ENCODE measurements at regions of chr20 and their contacts with region 1.

Region 1: DNA sequence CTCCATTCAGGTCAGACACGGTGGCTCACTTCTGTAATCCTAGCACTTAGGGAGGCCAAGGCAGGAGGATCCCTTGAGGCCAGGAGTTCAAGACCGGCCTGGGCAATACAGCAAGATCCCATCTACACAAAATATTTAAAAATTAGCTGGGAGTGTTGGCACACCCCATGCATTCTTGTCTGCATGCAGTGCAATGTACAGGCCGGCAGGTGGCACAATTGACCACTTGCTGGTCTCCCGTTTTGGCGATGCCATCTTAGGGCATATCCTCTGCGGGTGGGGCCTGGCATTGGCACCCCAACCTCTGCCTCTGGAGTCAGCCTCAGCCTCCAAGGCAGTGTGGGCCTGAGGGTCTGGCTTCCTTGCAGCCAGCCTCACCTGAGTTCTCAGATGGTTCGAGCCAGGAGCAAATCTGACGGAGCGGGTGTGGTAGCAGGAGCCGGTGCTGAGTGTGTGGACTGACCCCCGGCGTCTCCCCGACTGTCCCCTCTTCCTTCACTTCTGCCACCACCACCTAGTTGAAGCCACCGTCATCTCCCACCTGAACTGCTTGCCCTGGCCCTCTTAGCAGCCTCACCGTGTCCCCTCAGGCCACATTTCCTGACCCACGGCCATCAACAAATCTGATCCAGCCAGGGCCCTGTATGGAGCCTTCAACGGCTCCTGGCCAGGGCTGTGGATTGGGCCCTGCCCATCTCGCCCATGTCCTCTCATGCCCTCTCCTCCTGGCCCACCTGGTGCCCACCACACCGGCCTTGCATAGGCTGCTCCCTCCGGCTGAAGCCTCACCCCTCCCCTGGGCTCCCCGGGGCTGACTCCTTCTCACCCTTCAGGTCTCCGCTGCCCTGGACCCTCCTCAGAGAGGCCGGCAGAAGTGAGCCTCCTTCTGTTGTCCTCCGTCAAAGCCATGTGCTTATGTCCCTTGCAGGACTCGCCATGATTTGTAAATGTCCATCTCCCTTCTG is 44.0 kb downstream of the EFCAB8 start:
- DNase-seq: peak; percentile 28 to 83 (median 71)
- ATAC-seq: peak; percentile 98
- H3K4me3 ChIP-seq: no peak overlapping the region
- H3K4me3 Mint-ChIP-seq: no peak overlapping the region
- H3K27ac ChIP-seq: no peak overlapping the region
- H3K27ac Mint-ChIP-seq: no peak overlapping the region
- H3K4me1 ChIP-seq: peaks cover 17% of the 10 kb centered on the region
- H3K4me1 Mint-ChIP-seq: peaks cover 22% of the 10 kb centered on the region
- H3K27me3 ChIP-seq: no peaks in the 10 kb centered on the region
- H3K27me3 Mint-ChIP-seq: no peaks in the 10 kb centered on the region
- CTCF ChIP-seq: peak; percentile 97

Region 2: GRCh38 chr20:32509639-32510066 is 393.1 kb before region 1 on chr20:
- CTCF ChIA-PET with region 1: no interaction called
- POLR2A ChIA-PET with region 1: no interaction called
- intact Hi-C with region 1: no loop called
- DNase-seq: peak; percentile 46 to 90 (median 81)
- ATAC-seq: peak; percentile 78
- H3K4me3 ChIP-seq: peak overlapping the region; percentile 51 to 77
- H3K4me3 Mint-ChIP-seq: peak overlapping the region; percentile 88
- H3K27ac ChIP-seq: peak overlapping the region; percentile 69 to 72
- H3K27ac Mint-ChIP-seq: peak overlapping the region; percentile 97
- H3K4me1 ChIP-seq: peaks cover 70% of the 10 kb centered on the region
- H3K4me1 Mint-ChIP-seq: peaks cover 77% of the 10 kb centered on the region
- H3K27me3 ChIP-seq: no peaks in the 10 kb centered on the region
- H3K27me3 Mint-ChIP-seq: no peaks in the 10 kb centered on the region
- CTCF ChIP-seq: no peak

Region 3: DNA sequence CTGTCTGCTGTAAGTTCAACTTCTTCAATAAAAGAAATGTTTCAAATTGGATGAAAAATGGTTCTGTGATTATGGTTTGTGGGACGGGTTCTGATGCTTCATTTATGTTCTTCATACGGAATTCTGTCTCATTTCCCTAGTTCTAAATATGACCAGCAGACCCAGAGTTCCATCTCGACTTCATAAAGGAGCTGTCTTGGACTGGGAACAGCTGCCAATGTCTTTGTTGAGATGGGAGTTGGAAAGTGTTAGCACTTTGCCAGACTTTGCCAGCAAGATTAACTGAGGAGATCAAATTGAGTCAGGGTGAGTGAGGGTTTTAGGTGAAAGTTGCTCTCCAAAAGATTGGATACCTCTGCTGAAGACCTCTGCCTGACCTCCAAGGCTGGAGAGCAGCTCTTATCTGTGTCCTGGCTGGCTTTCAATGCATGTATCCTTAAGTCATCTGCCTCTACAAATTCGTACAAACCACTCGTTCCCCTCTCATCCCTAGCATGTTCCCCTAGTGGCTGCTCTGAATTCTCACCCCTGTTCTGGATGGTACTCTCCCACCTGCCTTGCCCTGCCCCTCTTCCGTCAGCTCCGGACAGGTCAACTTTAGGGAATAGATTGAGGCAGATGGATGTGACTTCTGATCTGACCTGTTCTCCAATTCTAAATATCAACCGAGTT is 43.9 kb before region 1 on chr20 and contains the start of gene EFCAB8:
- CTCF ChIA-PET with region 1: no interaction called
- POLR2A ChIA-PET with region 1: no interaction called
- intact Hi-C with region 1: no loop called
- DNase-seq: no peak
- ATAC-seq: no peak
- H3K4me3 ChIP-seq: no peak within 1 kb of the TSS
- H3K4me3 Mint-ChIP-seq: no peak within 1 kb of the TSS
- H3K27ac ChIP-seq: peak within 1 kb of the TSS in 1 of 2 experiments; percentile 10
- H3K27ac Mint-ChIP-seq: peak within 1 kb of the TSS; percentile 72
- H3K4me1 ChIP-seq: no peaks in the 10 kb centered on the region
- H3K4me1 Mint-ChIP-seq: peaks cover 26% of the 10 kb centered on the region
- H3K27me3 ChIP-seq: no peaks in the 10 kb centered on the region
- H3K27me3 Mint-ChIP-seq: no peaks in the 10 kb centered on the region
- CTCF ChIP-seq: no peak
- total RNA-seq, gene EFCAB8: 0.75 to 0.92 TPM

Region 4: DNA sequence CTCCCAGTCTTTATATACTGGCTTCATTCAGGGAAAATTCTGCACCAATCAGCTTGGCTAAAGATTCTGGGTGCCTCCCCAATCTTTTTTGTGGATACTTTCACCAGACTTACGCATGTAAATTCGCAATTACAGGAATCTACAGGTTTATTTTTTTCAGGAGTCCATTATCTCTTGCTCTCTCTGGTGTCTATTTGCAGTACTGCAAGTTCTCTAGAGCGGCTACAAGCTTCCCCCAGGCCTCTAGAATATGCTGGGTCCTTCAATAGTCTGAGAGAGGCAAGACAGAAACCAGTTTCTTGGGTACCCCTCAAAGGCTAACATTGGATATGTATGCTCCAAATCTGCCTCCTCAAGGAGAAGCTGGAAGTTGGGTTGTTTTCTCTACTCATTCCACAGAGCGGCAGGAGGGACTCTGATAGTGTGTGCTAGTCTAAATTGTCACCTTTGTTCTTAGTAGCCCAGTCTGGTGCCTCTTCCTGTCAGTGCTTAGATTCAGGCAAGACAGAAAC is 43.0 kb after region 1 on chr20:
- CTCF ChIA-PET with region 1: interaction called, 15 read pairs
- POLR2A ChIA-PET with region 1: no interaction called
- intact Hi-C with region 1: loop called (anchors 1 to 2 kb)
- DNase-seq: peak in 3 of 9 experiments; percentile 20 to 66 (median 55)
- ATAC-seq: peak; percentile 96
- H3K4me3 ChIP-seq: no peak overlapping the region
- H3K4me3 Mint-ChIP-seq: peak overlapping the region; percentile 59
- H3K27ac ChIP-seq: peak overlapping the region in 1 of 2 experiments; percentile 10
- H3K27ac Mint-ChIP-seq: peak overlapping the region; percentile 90
- H3K4me1 ChIP-seq: peaks cover 19% of the 10 kb centered on the region
- H3K4me1 Mint-ChIP-seq: peaks cover 37% of the 10 kb centered on the region
- H3K27me3 ChIP-seq: no peaks in the 10 kb centered on the region
- H3K27me3 Mint-ChIP-seq: no peaks in the 10 kb centered on the region
- CTCF ChIP-seq: peak; percentile 79

Region 5: GRCh38 chr20:32999603-33000250 is 97.0 kb after region 1 on chr20:
- CTCF ChIA-PET with region 1: interaction called, 29 read pairs
- POLR2A ChIA-PET with region 1: no interaction called
- intact Hi-C with region 1: no loop called
- DNase-seq: no peak
- ATAC-seq: no peak
- H3K4me3 ChIP-seq: no peak overlapping the region
- H3K4me3 Mint-ChIP-seq: no peak overlapping the region
- H3K27ac ChIP-seq: no peak overlapping the region
- H3K27ac Mint-ChIP-seq: no peak overlapping the region
- H3K4me1 ChIP-seq: peaks cover 4% of the 10 kb centered on the region
- H3K4me1 Mint-ChIP-seq: peaks cover 36% of the 10 kb centered on the region
- H3K27me3 ChIP-seq: no peaks in the 10 kb centered on the region
- H3K27me3 Mint-ChIP-seq: no peaks in the 10 kb centered on the region
- CTCF ChIP-seq: no peak

Region 6: GRCh38 chr20:33076662-33077372 is 174.1 kb after region 1 on chr20:
- CTCF ChIA-PET with region 1: interaction called, 5 read pairs
- POLR2A ChIA-PET with region 1: no interaction called
- intact Hi-C with region 1: loop called in 1 of 2 experiments (anchors 1 kb)
- DNase-seq: peak in 2 of 9 experiments; percentile 27 to 32
- ATAC-seq: no peak
- H3K4me3 ChIP-seq: no peak overlapping the region
- H3K4me3 Mint-ChIP-seq: no peak overlapping the region
- H3K27ac ChIP-seq: no peak overlapping the region
- H3K27ac Mint-ChIP-seq: no peak overlapping the region
- H3K4me1 ChIP-seq: no peaks in the 10 kb centered on the region
- H3K4me1 Mint-ChIP-seq: peaks cover 3% of the 10 kb centered on the region
- H3K27me3 ChIP-seq: no peaks in the 10 kb centered on the region
- H3K27me3 Mint-ChIP-seq: no peaks in the 10 kb centered on the region
- CTCF ChIP-seq: no peak

Region 7: GRCh38 chr20:33211817-33212424 is 309.2 kb after region 1 on chr20:
- CTCF ChIA-PET with region 1: interaction called, 3 read pairs
- POLR2A ChIA-PET with region 1: no interaction called
- intact Hi-C with region 1: loop called (anchors 1 kb)
- DNase-seq: peak in 4 of 9 experiments; percentile 18 to 49 (median 32)
- ATAC-seq: no peak
- H3K4me3 ChIP-seq: no peak overlapping the region
- H3K4me3 Mint-ChIP-seq: no peak overlapping the region
- H3K27ac ChIP-seq: no peak overlapping the region
- H3K27ac Mint-ChIP-seq: no peak overlapping the region
- H3K4me1 ChIP-seq: no peaks in the 10 kb centered on the region
- H3K4me1 Mint-ChIP-seq: peaks cover 4% of the 10 kb centered on the region
- H3K27me3 ChIP-seq: peaks cover 0 to 10% of the 10 kb centered on the region in 2 experiments
- H3K27me3 Mint-ChIP-seq: peaks cover 53% of the 10 kb centered on the region
- CTCF ChIP-seq: no peak

Region 8: DNA sequence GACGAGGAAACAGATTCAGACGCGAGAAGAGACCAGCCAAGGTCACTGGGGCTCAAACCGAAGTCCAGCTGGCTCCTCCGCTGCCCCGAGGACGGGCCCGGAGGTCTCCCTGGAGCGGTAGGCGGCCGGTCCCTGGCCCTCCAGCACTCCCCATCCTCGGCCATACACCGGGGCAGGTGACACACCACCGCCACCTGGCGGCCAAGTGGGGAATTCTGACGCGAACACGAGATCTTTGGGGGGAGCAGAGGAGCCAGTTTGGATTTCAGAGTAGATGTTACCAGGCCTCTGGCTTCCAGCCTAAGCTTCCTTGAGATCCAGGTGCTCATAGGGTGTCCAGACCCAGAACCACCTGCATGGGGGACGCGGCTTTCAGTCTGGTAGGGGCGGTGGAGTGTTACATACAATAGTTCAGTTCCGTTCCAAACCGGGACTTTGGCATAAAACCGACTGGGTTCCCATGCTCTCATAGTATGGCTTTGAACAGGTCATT is 396.4 kb after region 1 on chr20:
- CTCF ChIA-PET with region 1: interaction called, 17 read pairs
- POLR2A ChIA-PET with region 1: no interaction called
- intact Hi-C with region 1: loop called (anchors 1 kb)
- DNase-seq: peak; percentile 58 to 83 (median 75)
- ATAC-seq: peak; percentile 82
- H3K4me3 ChIP-seq: no peak overlapping the region
- H3K4me3 Mint-ChIP-seq: no peak overlapping the region
- H3K27ac ChIP-seq: no peak overlapping the region
- H3K27ac Mint-ChIP-seq: no peak overlapping the region
- H3K4me1 ChIP-seq: no peaks in the 10 kb centered on the region
- H3K4me1 Mint-ChIP-seq: no peaks in the 10 kb centered on the region
- H3K27me3 ChIP-seq: no peaks in the 10 kb centered on the region
- H3K27me3 Mint-ChIP-seq: peaks cover 6% of the 10 kb centered on the region
- CTCF ChIP-seq: peak; percentile 85

Measured in CD8-positive, alpha-beta T cell (primary cell).